ENCODE measurements at regions of chr11 and their contacts with region 1.

Region 1: DNA sequence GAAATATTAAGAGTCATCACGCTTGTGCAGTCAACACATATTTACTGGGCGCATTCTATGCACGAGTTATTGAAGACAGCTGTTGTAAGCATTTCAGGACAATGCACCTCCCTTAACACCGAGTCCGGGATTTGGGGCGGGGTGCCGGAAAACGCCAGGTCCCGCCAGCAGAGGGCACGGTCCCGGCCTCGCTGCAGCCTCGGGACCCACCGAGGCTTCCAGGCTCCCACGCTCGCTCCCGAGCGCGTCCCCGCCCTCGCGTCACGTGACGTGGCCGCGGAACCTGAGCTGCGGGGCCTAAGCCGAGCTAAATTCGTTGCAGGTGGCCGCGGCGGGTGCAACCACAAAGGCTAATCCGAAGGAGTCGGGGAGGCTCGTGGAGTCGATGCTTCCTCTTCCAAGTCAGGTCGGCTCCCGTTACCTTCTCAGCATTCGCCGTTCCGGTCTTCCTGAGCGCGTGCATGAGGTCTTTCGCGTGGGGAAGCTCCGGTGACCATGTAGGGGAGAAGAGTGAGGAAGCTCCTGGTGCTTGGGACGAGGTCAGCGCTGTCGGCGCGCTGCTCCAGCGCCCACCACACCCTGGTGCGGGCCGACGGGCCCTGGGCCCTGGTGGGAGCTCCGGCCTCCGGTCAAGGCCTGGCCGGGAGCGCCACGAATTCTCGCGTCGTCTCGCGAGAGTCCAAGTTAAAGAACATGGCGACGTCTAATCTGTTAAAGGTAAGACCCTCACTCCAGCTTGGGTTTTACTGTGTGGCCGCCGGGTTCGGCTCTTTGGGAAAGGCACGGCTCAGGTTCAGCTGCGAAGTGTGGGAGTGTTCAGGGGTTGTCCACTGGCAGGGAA is at the start of gene CUL5:
- DNase-seq: peak; percentile 92
- ATAC-seq: peak; percentile 91
- H3K4me3 Mint-ChIP-seq: peak within 1 kb of the TSS; percentile 97
- H3K27ac Mint-ChIP-seq: peak within 1 kb of the TSS; percentile 90
- H3K4me1 Mint-ChIP-seq: peaks cover 17% of the 10 kb centered on the region
- H3K27me3 Mint-ChIP-seq: no peaks in the 10 kb centered on the region
- total RNA-seq, gene CUL5: 28.4 to 34.4 TPM

Region 2: GRCh38 chr11:108069947-108070346 is 61.1 kb after region 1 on chr11:
- CTCF ChIA-PET with region 1: interaction called, 10 read pairs
- DNase-seq: no peak
- ATAC-seq: peak; percentile 97
- H3K4me3 Mint-ChIP-seq: peak overlapping the region; percentile 20
- H3K27ac Mint-ChIP-seq: peak overlapping the region; percentile 84
- H3K4me1 Mint-ChIP-seq: peaks cover 12% of the 10 kb centered on the region
- H3K27me3 Mint-ChIP-seq: no peaks in the 10 kb centered on the region

Region 3: GRCh38 chr11:108147150-108147549 is 138.3 kb after region 1 on chr11:
- CTCF ChIA-PET with region 1: no interaction called
- DNase-seq: no peak
- ATAC-seq: no peak
- H3K4me3 Mint-ChIP-seq: no peak overlapping the region
- H3K27ac Mint-ChIP-seq: no peak overlapping the region
- H3K4me1 Mint-ChIP-seq: peaks cover 11% of the 10 kb centered on the region
- H3K27me3 Mint-ChIP-seq: no peaks in the 10 kb centered on the region

Measured in activated CD8-positive, alpha-beta memory T cell treated with anti-CD3 and anti-CD28 coated beads, Interleukin-2, amount 10 ng/mL, durations not matched to agents 7 days and 5 days (primary cell).